Activated CD4-positive, alpha-beta T cell treated with anti-CD3 and anti-CD28 coated beads, Interleukin-2, amount 10 ng/mL, durations not matched to agents 7 days and 5 days (primary cell): ENCODE measurements at regions of chr16 and their contacts with region 1.

Region 1: GRCh38 chr16:69112285-69113129 is 7.1 kb downstream of the HAS3 start:
- DNase-seq: peak; percentile 43
- H3K4me3 Mint-ChIP-seq: no peak overlapping the region
- H3K27ac Mint-ChIP-seq: no peak overlapping the region
- H3K4me1 Mint-ChIP-seq: peaks cover 5% of the 10 kb centered on the region
- H3K27me3 Mint-ChIP-seq: peaks cover 8% of the 10 kb centered on the region

Region 2: GRCh38 chr16:68229431-68230198 is 882.9 kb before region 1 on chr16:
- CTCF ChIA-PET with region 1: no interaction called
- POLR2A ChIA-PET with region 1: no interaction called
- DNase-seq: peak; percentile 48
- H3K4me3 Mint-ChIP-seq: no peak overlapping the region
- H3K27ac Mint-ChIP-seq: peak overlapping the region; percentile 25
- H3K4me1 Mint-ChIP-seq: peaks cover 47% of the 10 kb centered on the region
- H3K27me3 Mint-ChIP-seq: no peaks in the 10 kb centered on the region

Region 3: GRCh38 chr16:69123910-69124309 is 11.4 kb after region 1 on chr16:
- CTCF ChIA-PET with region 1: interaction called, 16 read pairs
- POLR2A ChIA-PET with region 1: interaction called, 4 read pairs
- DNase-seq: peak; percentile 82
- H3K4me3 Mint-ChIP-seq: no peak overlapping the region
- H3K27ac Mint-ChIP-seq: no peak overlapping the region
- H3K4me1 Mint-ChIP-seq: peaks cover 21% of the 10 kb centered on the region
- H3K27me3 Mint-ChIP-seq: no peaks in the 10 kb centered on the region